ENCODE measurements at regions of chr13 and their contacts with region 1.

Region 1: DNA sequence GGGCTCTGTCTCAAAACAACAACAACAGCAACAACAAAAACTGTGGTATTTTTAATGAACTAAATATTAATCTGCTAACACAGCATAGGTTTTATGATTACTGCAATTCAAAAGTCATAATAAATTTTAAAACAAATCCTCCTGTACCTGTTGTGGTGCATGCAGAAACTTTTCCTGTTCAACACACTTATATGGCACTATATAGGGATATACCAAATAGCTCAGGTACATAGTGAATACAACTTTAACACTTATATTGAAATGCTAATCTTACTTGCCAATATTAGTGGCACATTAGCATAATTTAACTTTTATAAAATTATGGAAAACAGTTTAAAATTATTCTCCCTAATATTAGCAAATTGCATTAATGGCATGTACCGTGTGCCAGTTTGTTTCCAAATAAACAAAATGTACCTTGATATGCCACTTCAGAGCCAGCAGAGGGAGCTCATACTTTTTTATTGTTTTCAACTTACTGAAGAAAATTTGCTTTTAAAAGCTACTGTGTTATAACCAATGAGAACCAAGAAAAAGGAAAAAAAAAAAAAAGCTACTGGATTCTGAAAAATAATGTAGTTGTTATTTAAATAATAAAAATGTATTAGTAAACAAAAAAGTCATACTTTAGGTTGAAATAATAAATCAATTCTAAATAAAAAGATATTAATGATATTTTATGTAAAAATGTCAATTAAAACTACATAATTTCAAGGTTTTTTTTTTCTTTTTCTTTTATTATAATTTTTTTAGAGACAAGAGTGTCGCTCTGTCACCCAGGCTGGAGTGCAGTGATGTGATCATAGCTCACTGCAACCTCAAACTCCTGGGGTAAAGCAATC is 18.0 kb upstream of the RBM26 start:
- DNase-seq: no peak
- H3K4me3 ChIP-seq: no peak overlapping the region
- H3K27ac ChIP-seq: no peak overlapping the region
- H3K4me1 ChIP-seq: no peaks in the 10 kb centered on the region
- H3K27me3 ChIP-seq: no peaks in the 10 kb centered on the region
- CTCF ChIP-seq: peak in 2 of 3 experiments; percentile 46 to 47; a peak in 2 of 4 replicates
- EP300 ChIP-seq: no peak
- POLR2A ChIP-seq: no peak
- RAD21 ChIP-seq: peak; percentile 70 to 74

Region 2: DNA sequence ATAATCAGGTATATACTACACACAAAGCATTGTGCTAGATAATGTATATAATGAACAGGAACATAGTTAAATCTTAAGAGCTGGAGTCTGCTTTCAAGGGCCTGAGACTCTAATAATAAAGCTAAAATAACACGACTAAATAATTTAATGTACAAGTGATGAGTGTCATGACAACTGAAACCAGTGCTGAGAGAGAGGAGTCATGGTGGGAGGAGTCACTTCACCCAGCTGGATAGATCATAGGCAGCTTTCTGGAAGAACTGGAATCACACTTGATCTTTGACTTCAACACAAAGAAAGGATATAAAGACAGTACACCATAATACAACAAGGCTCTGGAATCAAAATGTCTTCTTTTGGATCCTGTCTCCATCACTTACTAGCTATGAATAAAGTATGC is 25.1 kb before region 1 on chr13:
- CTCF ChIA-PET with region 1: interaction called, 13 read pairs
- POLR2A ChIA-PET with region 1: no interaction called
- DNase-seq: no peak
- H3K4me3 ChIP-seq: no peak overlapping the region
- H3K27ac ChIP-seq: no peak overlapping the region
- H3K4me1 ChIP-seq: peaks cover 0 to 5% (median 2%) of the 10 kb centered on the region in 4 experiments; a peak in 4 of 7 replicates
- H3K27me3 ChIP-seq: no peaks in the 10 kb centered on the region
- CTCF ChIP-seq: no peak
- EP300 ChIP-seq: no peak
- POLR2A ChIP-seq: no peak
- RAD21 ChIP-seq: no peak

Region 3: DNA sequence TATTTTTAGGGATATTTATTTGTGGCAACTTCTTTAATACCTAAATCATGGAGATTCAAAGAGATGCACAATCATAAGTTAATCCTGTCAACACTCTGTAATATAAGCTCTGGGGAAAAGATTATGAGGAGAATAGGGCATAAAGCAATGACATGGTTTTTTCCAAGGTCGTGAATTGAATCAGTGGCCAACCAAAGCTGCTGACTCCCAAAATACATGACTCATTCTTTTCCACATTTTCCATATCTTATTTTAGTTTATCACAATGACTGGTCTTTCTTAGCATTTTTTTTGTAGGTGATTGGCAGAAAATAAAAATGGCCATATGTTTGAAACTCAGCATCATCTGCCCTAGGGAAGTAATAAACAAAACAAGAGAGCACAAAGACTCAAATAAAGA is 10.5 kb after region 1 on chr13:
- CTCF ChIA-PET with region 1: interaction called, 32 read pairs
- POLR2A ChIA-PET with region 1: interaction called, 4 read pairs
- DNase-seq: no peak
- H3K4me3 ChIP-seq: no peak overlapping the region
- H3K27ac ChIP-seq: no peak overlapping the region
- H3K4me1 ChIP-seq: no peaks in the 10 kb centered on the region
- H3K27me3 ChIP-seq: no peaks in the 10 kb centered on the region
- CTCF ChIP-seq: no peak
- EP300 ChIP-seq: no peak
- POLR2A ChIP-seq: no peak
- RAD21 ChIP-seq: no peak

Region 4: GRCh38 chr13:79445968-79446645 is 22.1 kb after region 1 on chr13:
- CTCF ChIA-PET with region 1: interaction called, 14 read pairs
- POLR2A ChIA-PET with region 1: interaction called, 3 read pairs
- DNase-seq: no peak
- H3K4me3 ChIP-seq: no peak overlapping the region
- H3K27ac ChIP-seq: no peak overlapping the region
- H3K4me1 ChIP-seq: no peaks in the 10 kb centered on the region; a peak in 1 of 7 replicates
- H3K27me3 ChIP-seq: peaks cover 0 to 1% (median 0%) of the 10 kb centered on the region in 4 experiments; a peak in 1 of 7 replicates
- CTCF ChIP-seq: peak in 2 of 3 experiments; percentile 8 to 12; a peak in 2 of 4 replicates
- EP300 ChIP-seq: no peak
- POLR2A ChIP-seq: no peak
- RAD21 ChIP-seq: peak; percentile 8 to 20; a peak in 2 of 4 replicates

Region 5: DNA sequence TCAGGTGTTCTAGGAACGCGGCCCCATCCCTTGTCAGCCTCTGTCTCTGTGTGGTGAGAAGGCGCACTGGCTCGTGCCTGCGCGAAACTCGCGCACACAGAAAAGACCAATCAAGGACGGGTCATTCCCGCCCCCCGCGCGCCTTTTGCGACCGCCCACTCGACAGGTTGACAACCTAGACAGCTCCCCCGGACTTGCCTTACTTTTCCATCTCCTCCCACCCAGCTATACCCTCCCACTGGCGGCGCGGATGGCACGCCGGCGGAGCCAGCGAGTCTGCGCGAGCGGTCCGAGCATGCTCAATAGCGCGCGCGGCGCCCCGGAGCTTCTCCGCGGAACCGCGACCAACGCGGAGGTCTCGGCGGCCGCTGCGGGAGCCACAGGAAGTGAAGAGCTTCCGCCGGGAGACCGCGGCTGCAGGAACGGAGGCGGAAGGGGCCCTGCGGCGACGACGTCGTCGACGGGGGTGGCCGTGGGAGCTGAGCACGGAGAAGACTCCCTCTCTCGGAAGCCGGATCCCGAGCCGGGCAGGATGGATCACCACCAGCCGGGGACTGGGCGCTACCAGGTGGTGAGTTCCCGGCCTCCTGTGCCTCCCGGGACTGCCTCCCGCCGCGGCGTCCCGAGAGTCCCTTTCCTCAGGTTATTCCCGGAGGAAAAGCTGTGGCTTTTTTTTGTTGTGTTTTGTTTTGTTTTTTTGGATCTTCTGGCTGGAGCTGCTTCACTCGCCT is 57.1 kb after region 1 on chr13 and contains the start of gene NDFIP2:
- CTCF ChIA-PET with region 1: interaction called, 13 read pairs
- POLR2A ChIA-PET with region 1: interaction called, 5 read pairs
- DNase-seq: peak; percentile 25 to 88
- H3K4me3 ChIP-seq: peak within 1 kb of the TSS; percentile 62 to 86 (median 84)
- H3K27ac ChIP-seq: no peak within 1 kb of the TSS
- H3K4me1 ChIP-seq: peaks cover 0 to 3% (median 1%) of the 10 kb centered on the region in 4 experiments; a peak in 2 of 7 replicates
- H3K27me3 ChIP-seq: no peaks in the 10 kb centered on the region; a peak in 1 of 7 replicates
- CTCF ChIP-seq: no peak
- EP300 ChIP-seq: no peak
- POLR2A ChIP-seq: 0 out of 3 replicates have a peak, but pooled peaks of 1 of the 2 experiments have one; percentile 45
- RAD21 ChIP-seq: no peak
- total RNA-seq, gene NDFIP2: 30.4 and 32.9 TPM in 2 replicates

Region 6: DNA sequence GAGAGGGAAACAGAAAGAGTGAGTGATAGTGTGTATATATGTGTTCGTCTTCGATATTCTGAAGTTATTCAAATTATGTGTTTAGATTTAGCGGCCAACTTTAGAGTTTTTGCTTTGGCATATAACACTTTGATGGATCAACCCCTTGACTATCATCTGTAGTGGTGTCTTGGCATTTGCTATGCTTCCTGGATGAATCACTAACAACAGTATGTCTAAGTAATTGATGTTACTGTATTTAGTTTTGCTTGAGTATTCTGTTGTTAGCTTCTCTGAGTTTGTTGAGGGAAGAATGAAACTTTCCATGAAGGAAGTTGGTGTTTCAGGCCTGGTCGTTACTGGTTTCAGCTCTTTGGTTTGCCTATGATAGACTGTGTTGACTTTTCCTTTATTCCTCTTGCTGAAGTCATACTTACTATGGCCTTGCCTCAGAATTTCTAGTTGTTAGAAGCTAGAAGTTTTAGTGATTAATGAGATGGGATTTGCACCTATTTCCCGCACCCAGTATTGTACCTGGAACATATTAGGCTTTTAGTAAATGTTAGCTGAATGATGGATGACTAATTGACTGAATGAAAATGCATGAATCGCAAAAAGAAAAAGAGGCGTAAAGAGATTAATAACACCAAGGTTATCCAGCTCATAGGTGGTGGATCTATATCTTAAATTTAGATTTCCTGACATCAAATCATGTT is 77.7 kb after region 1 on chr13:
- CTCF ChIA-PET with region 1: interaction called, 10 read pairs
- POLR2A ChIA-PET with region 1: no interaction called
- DNase-seq: no peak
- H3K4me3 ChIP-seq: no peak overlapping the region
- H3K27ac ChIP-seq: no peak overlapping the region
- H3K4me1 ChIP-seq: peaks cover 0 to 3% (median 1%) of the 10 kb centered on the region in 4 experiments; a peak in 3 of 7 replicates
- H3K27me3 ChIP-seq: no peaks in the 10 kb centered on the region
- CTCF ChIP-seq: no peak
- EP300 ChIP-seq: no peak
- POLR2A ChIP-seq: no peak
- RAD21 ChIP-seq: no peak

Region 7: GRCh38 chr13:79541426-79542049 is 117.5 kb after region 1 on chr13:
- CTCF ChIA-PET with region 1: interaction called, 111 read pairs
- POLR2A ChIA-PET with region 1: interaction called, 4 read pairs
- DNase-seq: no peak
- H3K4me3 ChIP-seq: no peak overlapping the region
- H3K27ac ChIP-seq: no peak overlapping the region
- H3K4me1 ChIP-seq: peaks cover 0 to 3% (median 0%) of the 10 kb centered on the region in 4 experiments; a peak in 2 of 7 replicates
- H3K27me3 ChIP-seq: no peaks in the 10 kb centered on the region
- CTCF ChIP-seq: peak in 2 of 3 experiments; percentile 47 to 49; a peak in 2 of 4 replicates
- EP300 ChIP-seq: no peak
- POLR2A ChIP-seq: no peak
- RAD21 ChIP-seq: peak; percentile 73 to 82